PC-9 (cell line): ENCODE measurements at regions of chr16 and their contacts with region 1.

Region 1: DNA sequence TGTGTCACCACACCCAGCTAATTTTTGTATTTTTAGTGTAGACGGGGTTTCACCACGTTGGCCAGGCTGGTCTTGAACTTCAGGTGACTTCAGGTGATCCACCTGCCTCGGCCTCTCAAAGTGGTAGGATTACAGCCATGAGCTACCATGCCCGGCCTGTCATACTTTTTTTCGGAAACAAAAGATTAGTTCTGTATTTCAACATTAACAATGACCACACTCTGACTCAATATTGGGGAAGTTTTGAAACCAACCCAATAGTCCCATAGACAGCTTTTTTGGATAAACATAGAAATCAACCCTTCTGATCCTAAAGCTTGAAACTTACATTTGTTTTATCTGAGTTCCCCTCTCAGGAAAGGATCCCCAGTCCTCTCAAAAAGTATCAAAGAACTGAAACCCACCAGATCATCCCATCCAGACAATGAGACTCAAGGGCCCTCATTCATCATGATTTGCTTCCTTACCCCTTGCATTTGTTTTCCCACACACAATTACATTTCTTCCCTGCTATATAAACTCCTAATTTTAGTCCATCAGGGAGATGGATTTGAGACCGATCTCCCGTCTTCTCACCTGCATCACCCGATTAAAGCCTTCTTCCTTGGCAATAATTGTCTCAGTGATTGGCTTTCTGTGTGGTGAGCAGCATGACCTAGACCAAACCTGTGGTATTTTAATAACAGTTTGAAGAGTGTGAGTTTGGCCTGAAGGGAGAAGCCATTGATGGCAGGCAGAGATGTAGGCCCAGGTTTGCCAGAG is 7.2 kb upstream of the AGRP start:
- DNase-seq: no peak
- H3K4me3 ChIP-seq: no peak overlapping the region
- H3K27ac ChIP-seq: no peak overlapping the region
- H3K4me1 ChIP-seq: 0 out of 2 replicates have a peak, but pooled peaks cover 4% of the 10 kb centered on the region
- H3K27me3 ChIP-seq: no peaks in the 10 kb centered on the region
- CTCF ChIP-seq: no peak

Region 2: DNA sequence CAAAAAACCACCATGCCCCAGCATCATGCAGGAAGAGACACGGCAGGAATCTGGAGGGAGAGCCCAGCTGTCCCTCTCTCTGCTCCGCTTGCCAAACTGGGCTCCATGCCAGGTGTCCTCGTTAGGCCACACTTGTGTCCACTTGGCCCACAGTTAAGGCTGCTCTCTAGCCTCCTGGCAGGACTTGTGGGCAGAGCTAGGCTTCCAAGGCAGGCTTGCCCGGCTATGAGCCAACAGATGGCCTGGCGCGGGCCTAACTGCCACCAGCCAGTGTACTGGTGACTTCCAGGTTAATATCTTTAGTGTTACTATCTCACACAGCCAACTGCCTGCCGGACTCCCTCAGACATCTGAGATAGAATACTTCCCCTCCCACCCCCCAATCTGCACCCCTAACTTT is 20.2 kb before region 1 on chr16:
- CTCF ChIA-PET with region 1: interaction called, 13 read pairs
- POLR2A ChIA-PET with region 1: no interaction called
- intact Hi-C with region 1: no loop called
- DNase-seq: no peak
- H3K4me3 ChIP-seq: no peak overlapping the region
- H3K27ac ChIP-seq: no peak overlapping the region
- H3K4me1 ChIP-seq: 0 out of 2 replicates have a peak, but pooled peaks cover 4% of the 10 kb centered on the region
- H3K27me3 ChIP-seq: no peaks in the 10 kb centered on the region
- CTCF ChIP-seq: no peak